Esophagus squamous epithelium (tissue), 5 donors: ENCODE measurements at regions of chr9 and their contacts with region 1.

Region 1: DNA sequence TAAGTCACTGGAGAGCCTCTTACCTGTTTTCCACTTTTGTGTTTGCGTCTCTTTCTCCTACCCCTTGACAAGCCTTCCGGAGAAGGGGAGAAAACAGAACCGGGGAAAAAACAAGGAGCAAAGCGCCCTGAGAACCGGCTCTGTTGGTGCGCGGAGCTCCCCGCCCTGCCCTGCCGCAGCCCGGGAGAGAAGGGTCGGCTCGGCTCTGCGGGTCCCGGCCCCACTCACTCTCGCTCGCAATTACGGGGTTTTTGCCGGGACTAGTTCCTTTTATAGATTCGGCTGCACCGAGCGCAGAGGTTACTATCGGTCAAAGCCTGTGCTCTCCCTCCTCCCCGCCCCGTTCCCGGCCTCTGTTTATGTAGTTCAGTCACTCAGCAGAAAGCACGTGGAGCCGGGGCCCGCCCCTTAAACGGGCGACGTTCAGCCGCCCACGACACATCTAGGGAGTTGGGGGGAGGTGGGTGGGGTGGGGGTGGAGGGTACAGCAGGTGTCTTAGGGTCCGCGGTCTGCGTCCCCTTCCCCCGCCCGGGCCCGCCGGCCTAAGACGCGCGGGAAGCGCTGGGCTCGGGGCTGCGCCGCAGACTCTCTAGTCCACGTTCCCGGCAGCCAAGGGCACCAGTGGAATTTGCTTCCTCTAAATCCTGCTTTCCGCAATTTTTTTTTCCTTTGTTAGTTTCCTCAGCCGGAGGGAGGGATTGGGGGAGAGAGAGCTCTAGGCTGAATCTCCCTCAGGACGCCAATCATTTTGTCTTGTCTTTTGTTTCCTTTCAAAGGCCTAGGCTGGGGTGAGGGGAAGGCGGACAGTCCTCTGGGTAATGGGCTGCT is at the start of gene ABCA1:
- DNase-seq: peak; percentile 78
- H3K4me3 ChIP-seq: peak within 1 kb of the TSS; percentile 75 to 91 (median 84)
- H3K27ac ChIP-seq: peak within 1 kb of the TSS; percentile 89 to 93 (median 90)
- H3K4me1 ChIP-seq: peaks cover 0 to 52% (median 23%) of the 10 kb centered on the region in 3 donors
- H3K27me3 ChIP-seq: no peaks in the 10 kb centered on the region
- CTCF ChIP-seq: no peak
- POLR2A ChIP-seq: peak in 2 of 4 donors; percentile 84 to 95
- total RNA-seq, gene ABCA1: 7.7 to 37.6 (median 23.3) TPM

Region 2: DNA sequence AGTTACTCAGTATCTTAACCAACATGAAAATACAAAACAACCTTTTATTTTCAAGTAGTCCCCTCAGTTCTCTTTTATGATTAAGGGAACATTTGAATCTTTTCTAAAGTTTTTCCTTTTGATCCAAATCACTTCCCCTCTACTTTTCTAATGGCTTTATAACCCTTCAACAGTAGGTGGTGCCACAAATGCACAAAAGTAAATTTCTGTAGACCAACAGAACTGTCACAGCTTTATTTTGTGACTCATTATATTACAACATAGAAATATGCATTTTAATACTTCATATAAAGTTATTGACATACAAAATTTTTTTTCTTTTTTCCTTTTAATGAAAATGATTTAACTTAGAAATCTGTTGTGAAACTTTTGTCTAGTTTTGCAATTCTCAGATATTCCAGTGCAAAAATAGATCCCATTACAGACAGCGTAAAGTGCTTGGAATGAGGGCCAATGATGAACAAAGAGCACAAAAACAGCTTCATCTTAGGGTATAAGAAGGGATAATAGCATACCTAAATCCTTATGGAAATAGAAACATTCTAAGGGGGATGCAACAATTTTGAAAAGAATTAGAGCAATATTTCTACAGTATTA is 147.2 kb before region 1 on chr9:
- intact Hi-C with region 1: no loop called
- DNase-seq: no peak
- H3K4me3 ChIP-seq: no peak overlapping the region
- H3K27ac ChIP-seq: no peak overlapping the region
- H3K4me1 ChIP-seq: peaks cover 0 to 21% (median 7%) of the 10 kb centered on the region in 3 donors
- H3K27me3 ChIP-seq: no peaks in the 10 kb centered on the region
- CTCF ChIP-seq: peak in 4 of 6 experiments; percentile 17 to 46 (median 34)
- POLR2A ChIP-seq: no peak

Region 3: DNA sequence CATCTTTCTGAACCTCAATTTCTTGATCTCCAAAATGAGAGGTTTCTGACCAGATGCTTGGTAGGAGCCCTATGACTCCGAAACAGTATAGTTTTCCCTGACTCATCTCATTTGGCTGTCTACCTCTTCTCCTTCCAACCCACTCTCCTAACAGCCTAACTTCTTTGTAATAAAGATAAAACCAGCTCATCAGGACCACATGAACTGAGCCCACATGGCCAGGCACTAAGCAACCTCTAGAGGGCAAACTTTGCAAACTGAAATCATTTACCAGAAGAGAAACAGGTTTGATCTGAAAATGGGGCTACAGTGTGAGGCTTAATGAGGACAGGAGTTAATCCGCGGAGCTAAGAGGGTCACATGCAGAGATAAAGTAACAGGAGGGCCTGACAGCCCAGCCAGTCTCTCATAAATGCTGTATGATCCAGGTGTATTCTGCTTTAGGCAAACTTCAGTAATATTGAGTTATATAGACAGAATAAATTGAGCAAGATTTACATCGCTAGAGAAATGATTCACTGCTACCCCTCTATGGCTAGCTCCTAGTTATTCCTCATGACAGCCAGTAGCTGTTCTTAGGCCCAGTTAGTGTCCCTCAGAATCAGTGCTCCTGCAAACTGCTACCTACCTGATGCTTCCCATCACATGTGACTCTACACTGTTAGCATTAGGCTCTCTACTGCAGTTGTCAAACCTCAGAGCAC is 64.8 kb before region 1 on chr9:
- intact Hi-C with region 1: loop called (anchors 10 kb)
- DNase-seq: no peak
- H3K4me3 ChIP-seq: no peak overlapping the region
- H3K27ac ChIP-seq: peak overlapping the region in 3 of 4 donors; percentile 37 to 56 (median 38)
- H3K4me1 ChIP-seq: peaks cover 19 to 71% (median 37%) of the 10 kb centered on the region in 3 donors
- H3K27me3 ChIP-seq: no peaks in the 10 kb centered on the region
- CTCF ChIP-seq: peak; percentile 55 to 86 (median 78)
- POLR2A ChIP-seq: no peak

Region 4: DNA sequence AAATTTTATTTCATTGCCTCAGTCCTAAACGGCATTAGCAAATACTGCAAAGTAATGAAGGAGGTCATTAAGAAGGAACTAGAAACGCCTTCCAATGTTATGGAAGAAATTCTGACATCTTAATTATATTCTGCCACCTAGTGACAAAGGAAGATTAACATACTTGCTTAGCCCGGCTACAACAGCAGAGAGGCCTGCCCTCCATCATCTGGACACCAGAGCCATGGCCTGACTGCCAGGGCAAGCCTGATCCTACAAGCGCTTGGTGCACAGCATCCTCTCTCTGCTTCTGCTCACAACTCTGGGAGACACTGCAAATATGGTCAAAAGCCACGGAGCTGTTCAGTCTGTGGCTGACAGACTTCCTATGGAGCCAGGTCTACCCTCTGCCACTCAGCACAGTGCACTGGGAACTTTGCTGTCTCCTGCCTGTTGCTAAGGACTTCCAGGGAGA is 229.0 kb after region 1 on chr9:
- intact Hi-C with region 1: loop called (anchors 5 kb)
- DNase-seq: no peak
- H3K4me3 ChIP-seq: no peak overlapping the region
- H3K27ac ChIP-seq: peak overlapping the region in 3 of 4 donors; percentile 19 to 54 (median 52)
- H3K4me1 ChIP-seq: peaks cover 7 to 23% (median 7%) of the 10 kb centered on the region in 3 donors
- H3K27me3 ChIP-seq: no peaks in the 10 kb centered on the region
- CTCF ChIP-seq: peak; percentile 41 to 67 (median 54)
- POLR2A ChIP-seq: no peak